ENCODE measurements at regions of chr10 and their contacts with region 1.

Region 1: DNA sequence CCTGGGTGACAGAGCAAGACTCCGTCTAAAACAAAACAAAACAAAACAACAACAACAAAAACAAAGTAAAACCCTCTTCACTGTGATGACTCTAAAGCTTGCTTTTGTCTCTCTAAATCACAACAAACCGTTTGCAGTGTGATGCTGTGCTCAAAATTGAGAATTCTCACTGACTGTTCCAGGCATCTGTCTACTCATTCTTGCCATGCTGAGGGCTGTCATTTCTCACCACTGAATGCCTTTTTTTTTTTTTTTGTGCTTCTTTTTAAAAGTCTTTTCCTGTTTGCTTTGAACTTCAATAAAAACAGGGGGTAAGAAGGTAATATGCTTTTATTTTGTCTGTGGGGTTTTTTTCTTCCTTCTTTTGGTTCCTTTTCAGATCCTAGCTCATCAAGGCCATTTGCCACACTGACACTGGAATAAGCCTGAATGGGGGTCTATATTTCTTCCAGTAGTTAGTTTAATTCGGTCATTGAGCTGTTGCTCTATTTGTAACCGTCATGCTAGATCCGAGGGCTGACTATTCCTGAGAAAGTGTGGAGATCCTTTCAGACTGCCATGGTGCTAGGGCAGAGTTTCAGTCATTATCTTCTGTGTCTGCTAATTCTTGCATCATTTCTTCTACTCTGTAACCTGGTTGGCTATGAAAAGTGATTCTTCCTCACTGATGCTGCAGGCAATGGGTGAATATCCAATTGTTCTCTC is 10.6 kb downstream of the FAS start:
- DNase-seq: peak; percentile 73
- ATAC-seq: peak; percentile 77
- H3K4me3 Mint-ChIP-seq: peak overlapping the region; percentile 78
- H3K27ac Mint-ChIP-seq: peak overlapping the region; percentile 90
- H3K4me1 Mint-ChIP-seq: peaks cover 73% of the 10 kb centered on the region
- H3K27me3 Mint-ChIP-seq: no peaks in the 10 kb centered on the region

Region 2: GRCh38 chr10:88880282-88881076 is 120.7 kb before region 1 on chr10:
- CTCF ChIA-PET with region 1: no interaction called
- DNase-seq: peak; percentile 92
- ATAC-seq: peak; percentile 79
- H3K4me3 Mint-ChIP-seq: peak overlapping the region; percentile 99
- H3K27ac Mint-ChIP-seq: peak overlapping the region; percentile 99
- H3K4me1 Mint-ChIP-seq: peaks cover 57% of the 10 kb centered on the region
- H3K27me3 Mint-ChIP-seq: no peaks in the 10 kb centered on the region

Region 3: GRCh38 chr10:88990384-88991160 is 10.6 kb before region 1 on chr10 and contains the start of gene FAS:
- CTCF ChIA-PET with region 1: interaction called, 44 read pairs
- DNase-seq: peak; percentile 90
- ATAC-seq: peak; percentile 71
- H3K4me3 Mint-ChIP-seq: peak within 1 kb of the TSS; percentile 94
- H3K27ac Mint-ChIP-seq: peak within 1 kb of the TSS; percentile 98
- H3K4me1 Mint-ChIP-seq: peaks cover 64% of the 10 kb centered on the region
- H3K27me3 Mint-ChIP-seq: no peaks in the 10 kb centered on the region
- total RNA-seq, gene FAS: 73.7 to 75.4 TPM